T-cell (primary cell): ENCODE measurements at regions of chr1 and their contacts with region 1.

Region 1: DNA sequence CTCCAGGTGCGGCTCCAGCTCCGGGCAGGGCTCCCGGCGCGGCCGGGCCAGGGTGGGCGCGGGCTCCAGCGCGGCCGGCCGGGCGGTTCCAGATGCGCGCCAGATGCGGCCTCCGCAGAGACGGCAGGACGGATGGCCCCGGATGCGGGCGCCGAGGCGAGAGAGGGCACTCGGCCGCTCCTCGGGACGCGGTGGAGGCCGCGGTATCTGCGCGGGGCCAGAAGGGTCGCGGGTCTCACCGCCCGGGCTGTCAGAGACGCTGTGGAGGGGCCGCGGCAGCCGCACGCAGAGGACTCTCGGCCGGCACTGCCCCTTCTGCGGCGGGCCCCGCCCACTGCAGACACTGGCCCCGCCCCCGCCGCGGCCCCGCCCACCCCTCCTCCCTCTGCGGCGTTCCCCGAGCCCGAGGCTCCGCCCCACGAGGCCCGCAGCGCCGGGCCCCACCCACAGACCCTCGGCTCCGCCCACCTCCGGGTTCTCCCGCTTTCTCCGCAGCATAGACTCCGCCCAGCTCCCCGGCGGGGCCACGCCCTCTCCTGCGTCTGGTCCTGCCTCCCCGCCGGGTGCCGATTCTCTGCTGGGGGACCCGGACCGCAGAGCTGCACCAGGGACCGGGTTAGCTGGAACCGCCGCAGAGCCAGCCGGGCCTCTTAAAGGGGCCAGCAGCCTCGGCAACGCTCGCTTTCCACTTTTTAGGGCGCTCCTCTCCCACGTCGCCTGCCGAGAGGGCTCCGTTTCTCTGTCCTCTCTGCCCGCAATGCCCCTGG is at the start of gene IFFO2:
- DNase-seq: peak; percentile 89 to 100 (median 97)
- ATAC-seq: peak; percentile 76 to 89 (median 82)
- H3K4me3 ChIP-seq: peak within 1 kb of the TSS; percentile 71 to 74
- H3K4me3 Mint-ChIP-seq: peak within 1 kb of the TSS; percentile 88 to 90 (median 89)
- H3K27ac ChIP-seq: peak within 1 kb of the TSS; percentile 100
- H3K27ac Mint-ChIP-seq: peak within 1 kb of the TSS; percentile 65 to 99
- H3K4me1 ChIP-seq: peaks cover 40 to 53% of the 10 kb centered on the region in 2 experiments
- H3K4me1 Mint-ChIP-seq: peaks cover 54 to 61% (median 55%) of the 10 kb centered on the region in 3 donors
- H3K27me3 ChIP-seq: peaks cover 0 to 5% of the 10 kb centered on the region in 2 experiments
- H3K27me3 Mint-ChIP-seq: no peaks in the 10 kb centered on the region
- total RNA-seq, gene IFFO2: 36.0 to 76.2 (median 37.7) TPM

Region 2: GRCh38 chr1:18874600-18874999 is 82.0 kb before region 1 on chr1:
- CTCF ChIA-PET with region 1: no interaction called
- POLR2A ChIA-PET with region 1: no interaction called
- DNase-seq: no peak
- ATAC-seq: no peak
- H3K4me3 ChIP-seq: no peak overlapping the region
- H3K4me3 Mint-ChIP-seq: no peak overlapping the region
- H3K27ac ChIP-seq: no peak overlapping the region
- H3K27ac Mint-ChIP-seq: no peak overlapping the region
- H3K4me1 ChIP-seq: no peaks in the 10 kb centered on the region
- H3K4me1 Mint-ChIP-seq: no peaks in the 10 kb centered on the region
- H3K27me3 ChIP-seq: peaks cover 0 to 6% of the 10 kb centered on the region in 2 experiments
- H3K27me3 Mint-ChIP-seq: no peaks in the 10 kb centered on the region

Region 3: DNA sequence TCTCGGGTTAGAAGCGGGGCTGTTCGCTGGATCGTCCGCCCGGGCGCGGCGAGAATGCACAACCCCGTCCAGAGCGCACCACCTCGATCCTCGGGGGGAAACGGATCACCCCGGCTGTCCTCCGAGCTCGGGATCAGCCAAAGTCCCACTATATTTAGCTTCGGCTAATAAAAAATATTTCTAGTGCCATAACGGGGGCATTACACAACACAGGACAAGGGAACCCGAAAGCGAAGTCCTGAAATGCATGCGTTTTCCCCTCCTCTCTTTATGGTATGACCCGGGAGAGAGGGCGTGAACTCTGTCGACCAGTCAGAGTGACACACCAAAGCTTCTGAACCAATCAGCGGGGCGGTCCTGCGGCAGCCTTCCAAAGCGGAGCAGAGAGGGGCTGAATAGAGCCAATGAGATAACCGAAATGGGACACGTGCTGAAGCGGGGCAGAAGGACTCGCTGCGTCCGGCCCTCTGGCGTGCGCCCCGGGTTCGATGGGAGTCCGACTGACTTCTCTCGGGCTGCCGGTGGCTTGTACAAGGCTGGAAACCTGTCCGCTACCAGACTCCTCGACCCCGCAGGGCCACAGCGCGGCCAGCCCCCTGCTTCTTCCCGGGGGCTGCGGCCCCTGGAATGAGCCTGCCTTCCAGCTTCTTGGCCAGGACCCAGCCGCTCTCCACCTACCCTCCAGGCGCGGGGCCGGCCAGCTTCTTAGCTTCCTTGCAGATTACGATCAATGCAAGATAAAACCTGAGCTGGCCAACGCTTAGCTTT is 53.8 kb before region 1 on chr1 and contains the start of gene ALDH4A1:
- CTCF ChIA-PET with region 1: interaction called in 1 of 2 experiments, 9 read pairs
- POLR2A ChIA-PET with region 1: interaction called, 5 to 11 read pairs
- DNase-seq: peak; percentile 79 to 97 (median 92)
- ATAC-seq: peak; percentile 95 to 98 (median 97)
- H3K4me3 ChIP-seq: peak within 1 kb of the TSS; percentile 75 to 77
- H3K4me3 Mint-ChIP-seq: peak within 1 kb of the TSS; percentile 88 to 91 (median 88)
- H3K27ac ChIP-seq: peak within 1 kb of the TSS; percentile 75
- H3K27ac Mint-ChIP-seq: peak within 1 kb of the TSS; percentile 96 to 99
- H3K4me1 ChIP-seq: peaks cover 16 to 33% of the 10 kb centered on the region in 2 experiments
- H3K4me1 Mint-ChIP-seq: peaks cover 30 to 47% (median 36%) of the 10 kb centered on the region in 3 donors
- H3K27me3 ChIP-seq: no peaks in the 10 kb centered on the region
- H3K27me3 Mint-ChIP-seq: no peaks in the 10 kb centered on the region
- total RNA-seq, gene ALDH4A1: 0.85 to 2.8 (median 2.2) TPM

Region 4: DNA sequence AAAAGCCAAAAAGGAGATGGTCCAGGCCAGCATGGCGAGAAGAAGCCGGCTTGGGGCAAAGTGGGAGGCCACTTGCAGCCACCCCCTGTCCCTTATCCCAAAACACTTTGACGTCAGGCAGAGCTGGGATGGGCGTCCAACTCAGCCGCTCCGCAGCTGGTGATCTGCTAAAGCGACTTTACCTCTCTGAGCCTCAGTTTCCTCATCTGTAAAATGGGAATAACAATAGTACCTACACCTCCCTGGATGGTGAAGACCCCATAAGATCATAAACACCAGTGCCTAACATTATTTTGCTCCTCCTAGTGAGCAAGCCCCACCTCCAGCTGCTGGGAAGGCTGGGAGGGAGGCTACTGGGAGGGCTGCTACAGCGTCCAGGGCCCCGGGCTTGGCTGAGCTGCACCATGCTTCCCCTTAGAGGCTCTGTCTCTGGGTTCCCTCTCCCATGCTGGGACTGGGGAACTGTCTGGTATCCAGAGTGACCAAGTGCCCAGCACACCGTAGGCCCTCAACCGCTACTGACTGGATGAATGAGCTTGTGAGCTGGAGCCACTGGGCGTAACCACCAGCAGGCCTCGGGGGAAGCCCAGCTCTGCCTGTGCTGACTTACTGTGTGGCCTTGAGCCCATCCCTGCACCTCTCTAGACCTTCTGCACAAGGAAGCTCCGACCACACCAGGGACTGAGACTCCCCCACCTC is 18.4 kb before region 1 on chr1:
- CTCF ChIA-PET with region 1: no interaction called
- POLR2A ChIA-PET with region 1: interaction called in 1 of 2 experiments, 12 read pairs
- DNase-seq: no peak
- ATAC-seq: no peak
- H3K4me3 ChIP-seq: no peak overlapping the region
- H3K4me3 Mint-ChIP-seq: no peak overlapping the region
- H3K27ac ChIP-seq: no peak overlapping the region
- H3K27ac Mint-ChIP-seq: peak overlapping the region; percentile 55 to 61
- H3K4me1 ChIP-seq: peaks cover 6 to 97% of the 10 kb centered on the region in 2 experiments
- H3K4me1 Mint-ChIP-seq: peaks cover 66 to 89% (median 76%) of the 10 kb centered on the region in 3 donors
- H3K27me3 ChIP-seq: no peaks in the 10 kb centered on the region
- H3K27me3 Mint-ChIP-seq: no peaks in the 10 kb centered on the region

Region 5: GRCh38 chr1:18981242-18981641 is 24.7 kb after region 1 on chr1:
- CTCF ChIA-PET with region 1: no interaction called
- POLR2A ChIA-PET with region 1: interaction called in 1 of 2 experiments, 10 read pairs
- DNase-seq: no peak
- ATAC-seq: no peak
- H3K4me3 ChIP-seq: no peak overlapping the region
- H3K4me3 Mint-ChIP-seq: no peak overlapping the region
- H3K27ac ChIP-seq: no peak overlapping the region
- H3K27ac Mint-ChIP-seq: no peak overlapping the region
- H3K4me1 ChIP-seq: no peaks in the 10 kb centered on the region
- H3K4me1 Mint-ChIP-seq: no peaks in the 10 kb centered on the region
- H3K27me3 ChIP-seq: peaks cover 2 to 23% of the 10 kb centered on the region in 2 experiments
- H3K27me3 Mint-ChIP-seq: peaks cover 14 to 25% of the 10 kb centered on the region in 2 donors